WTC11 (cell line): ENCODE measurements at regions of chr12 and their contacts with region 1.

Region 1: DNA sequence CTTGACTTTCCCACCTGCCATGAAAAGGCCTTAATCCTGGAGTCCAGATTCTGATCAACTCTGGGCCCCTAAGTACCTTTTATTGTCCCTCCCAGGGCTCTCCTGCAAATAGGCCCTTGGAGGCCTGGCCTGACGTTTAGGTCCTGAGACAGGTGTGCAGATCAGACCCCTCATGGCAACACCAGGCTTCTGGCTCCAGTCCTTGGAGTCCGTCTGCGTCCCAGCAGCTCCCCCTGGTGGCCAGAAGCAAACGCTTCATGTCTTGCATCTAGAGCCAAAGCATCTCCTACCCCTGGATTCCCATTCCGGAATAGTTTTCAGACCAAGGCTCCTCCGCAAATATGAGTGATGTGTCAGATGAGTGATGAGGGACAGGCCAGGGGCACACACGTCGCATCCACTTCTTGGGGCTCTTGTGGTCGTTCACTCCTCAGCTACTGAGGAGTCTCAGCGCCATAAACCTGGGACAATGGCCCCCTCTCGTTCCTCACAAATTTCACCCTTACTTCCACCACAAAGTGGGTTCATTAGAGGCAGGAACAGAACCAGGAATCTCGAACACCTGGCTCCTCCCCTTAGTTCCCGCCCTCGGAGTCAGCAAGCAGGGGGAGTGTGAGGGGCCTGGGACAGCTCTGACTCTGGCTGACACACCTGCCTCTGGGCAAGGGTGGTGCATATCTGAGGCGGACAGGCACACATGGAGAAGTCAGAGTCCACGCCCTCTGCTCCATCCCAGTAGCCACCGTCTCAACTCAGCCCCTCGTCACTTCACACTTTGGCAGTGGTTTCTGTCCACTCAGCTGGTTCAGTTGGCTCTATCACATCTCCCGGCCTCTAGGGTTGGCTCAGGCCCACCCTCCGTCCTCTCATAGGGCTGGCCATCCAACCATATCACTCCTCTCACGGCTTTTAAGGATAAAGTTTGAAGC is 77.9 kb upstream of the PWP1 start:
- DNase-seq: peak; percentile 93
- ATAC-seq: peak; percentile 71
- H3K4me3 Mint-ChIP-seq: no peak overlapping the region
- H3K27ac Mint-ChIP-seq: 0 out of 2 replicates have a peak overlapping the region, but pooled peaks have one; percentile 7
- H3K4me1 Mint-ChIP-seq: peaks cover 51% of the 10 kb centered on the region
- H3K27me3 Mint-ChIP-seq: no peaks in the 10 kb centered on the region
- CTCF ChIP-seq: peak; percentile 93

Region 2: GRCh38 chr12:107131832-107132616 is 475.7 kb before region 1 on chr12:
- CTCF ChIA-PET with region 1: interaction called, 35 read pairs
- POLR2A ChIA-PET with region 1: no interaction called
- DNase-seq: no peak
- ATAC-seq: peak; percentile 52
- H3K4me3 Mint-ChIP-seq: no peak overlapping the region
- H3K27ac Mint-ChIP-seq: no peak overlapping the region
- H3K4me1 Mint-ChIP-seq: peaks cover 34% of the 10 kb centered on the region
- H3K27me3 Mint-ChIP-seq: peaks cover 6% of the 10 kb centered on the region; the same call in 1 of the 2 replicates
- CTCF ChIP-seq: peak; percentile 37; the same call in 1 of the 2 replicates

Region 3: DNA sequence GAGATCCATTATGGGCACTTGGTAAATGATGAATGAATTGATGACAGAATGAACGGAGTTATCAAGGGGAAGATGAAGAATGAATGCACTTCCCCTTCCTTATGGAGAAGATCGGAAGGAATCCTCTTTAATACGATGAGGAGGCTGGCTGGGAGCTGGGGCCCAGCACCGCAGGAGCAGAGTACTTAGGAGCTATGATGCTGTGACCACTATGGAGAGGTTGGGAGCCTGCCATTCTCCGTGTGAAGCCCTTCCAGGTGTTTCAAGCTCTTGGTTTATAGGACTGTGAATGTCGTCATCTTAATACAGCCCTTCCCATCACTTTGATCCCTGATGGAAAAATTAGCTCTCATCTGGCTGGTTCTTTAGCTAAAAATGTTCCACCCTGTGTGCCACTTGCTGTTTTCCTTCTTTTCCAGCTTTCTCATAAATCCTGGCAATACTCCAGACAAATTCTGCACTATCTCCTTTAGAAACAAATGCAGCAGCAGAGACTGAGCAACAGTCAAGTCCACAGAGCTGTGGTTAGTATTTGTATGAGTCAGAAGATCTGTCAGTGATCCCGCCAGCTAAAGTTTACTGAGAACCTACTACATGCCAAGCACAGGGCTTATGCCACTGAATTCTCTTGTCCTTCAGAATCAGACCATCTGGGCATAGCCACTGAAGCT is 251.3 kb before region 1 on chr12:
- CTCF ChIA-PET with region 1: no interaction called
- POLR2A ChIA-PET with region 1: no interaction called
- DNase-seq: no peak
- ATAC-seq: no peak
- H3K4me3 Mint-ChIP-seq: no peak overlapping the region
- H3K27ac Mint-ChIP-seq: no peak overlapping the region
- H3K4me1 Mint-ChIP-seq: no peaks in the 10 kb centered on the region
- H3K27me3 Mint-ChIP-seq: peaks cover 4% of the 10 kb centered on the region; the same call in 1 of the 2 replicates
- CTCF ChIP-seq: no peak

Region 4: GRCh38 chr12:107402041-107403022 is 205.4 kb before region 1 on chr12:
- CTCF ChIA-PET with region 1: interaction called, 14 read pairs
- POLR2A ChIA-PET with region 1: no interaction called
- DNase-seq: peak; percentile 83
- ATAC-seq: peak; percentile 88
- H3K4me3 Mint-ChIP-seq: no peak overlapping the region
- H3K27ac Mint-ChIP-seq: no peak overlapping the region
- H3K4me1 Mint-ChIP-seq: peaks cover 35% of the 10 kb centered on the region
- H3K27me3 Mint-ChIP-seq: no peaks in the 10 kb centered on the region
- CTCF ChIP-seq: no peak; the same call in 1 of the 2 replicates

Region 5: DNA sequence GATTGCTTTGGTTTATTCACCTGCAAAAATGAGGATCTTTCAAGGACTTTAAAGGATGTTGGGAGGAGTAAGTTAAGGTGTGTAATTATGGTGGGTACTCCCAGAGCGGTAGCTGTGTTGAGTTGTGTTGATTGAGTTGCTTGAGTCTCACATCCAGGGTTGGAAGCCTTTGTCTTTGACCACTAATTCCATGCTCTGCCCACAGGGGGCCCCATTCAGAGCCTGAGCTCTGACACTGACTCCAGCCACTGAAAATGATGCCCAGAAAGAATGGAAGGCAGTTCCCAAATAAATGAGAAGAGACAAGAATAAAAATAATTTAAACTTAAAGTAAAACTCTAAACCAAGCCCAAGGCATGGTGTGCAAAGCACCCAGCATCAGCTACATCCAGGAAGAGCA is 159.5 kb before region 1 on chr12:
- CTCF ChIA-PET with region 1: interaction called, 12 read pairs
- POLR2A ChIA-PET with region 1: no interaction called
- DNase-seq: peak; percentile 67
- ATAC-seq: peak; percentile 82
- H3K4me3 Mint-ChIP-seq: no peak overlapping the region
- H3K27ac Mint-ChIP-seq: no peak overlapping the region
- H3K4me1 Mint-ChIP-seq: peaks cover 23% of the 10 kb centered on the region
- H3K27me3 Mint-ChIP-seq: no peaks in the 10 kb centered on the region; the same call in 1 of the 2 replicates
- CTCF ChIP-seq: no peak

Region 6: GRCh38 chr12:107468182-107468581 is 139.5 kb before region 1 on chr12:
- CTCF ChIA-PET with region 1: interaction called, 16 read pairs
- POLR2A ChIA-PET with region 1: no interaction called
- DNase-seq: no peak
- ATAC-seq: peak; percentile 25
- H3K4me3 Mint-ChIP-seq: no peak overlapping the region
- H3K27ac Mint-ChIP-seq: no peak overlapping the region
- H3K4me1 Mint-ChIP-seq: peaks cover 22% of the 10 kb centered on the region
- H3K27me3 Mint-ChIP-seq: peaks cover 3% of the 10 kb centered on the region
- CTCF ChIP-seq: no peak

Region 7: DNA sequence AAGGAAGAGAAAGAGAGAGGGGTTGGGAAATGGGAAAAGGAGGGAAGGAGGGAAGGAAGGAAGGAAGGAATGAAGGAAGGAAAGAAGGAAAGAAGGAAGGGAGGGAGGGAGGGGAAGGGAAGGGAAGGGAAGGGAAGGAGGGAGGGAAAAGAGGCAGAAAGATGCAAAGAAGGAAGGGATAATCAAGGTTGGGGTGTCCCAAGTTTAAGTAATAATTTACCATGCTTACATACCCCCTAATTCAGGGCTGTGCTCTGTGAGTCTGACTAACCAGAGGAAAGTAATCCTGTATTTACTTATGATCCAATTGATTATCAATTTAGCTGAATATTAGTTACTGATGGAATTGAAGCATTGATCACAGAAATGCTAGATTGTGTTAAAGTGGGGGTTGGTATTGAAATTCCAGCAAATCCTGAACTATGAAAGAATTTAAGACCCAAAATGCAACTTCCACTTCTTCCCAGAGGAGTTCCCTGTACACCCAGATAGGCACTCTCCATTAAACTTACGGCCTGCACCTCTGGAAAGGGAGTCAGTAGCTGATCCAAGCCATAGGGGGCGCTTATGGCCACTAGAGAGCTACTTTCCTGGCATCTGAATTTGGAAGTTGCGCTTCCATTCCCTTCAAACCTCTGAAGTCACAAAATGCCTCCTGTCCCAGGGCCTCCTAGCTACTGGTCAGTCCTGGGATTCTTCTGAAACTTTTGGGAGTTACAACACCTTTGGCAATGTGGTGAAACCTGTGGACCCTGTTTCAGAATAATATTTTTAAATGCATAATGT is 84.8 kb before region 1 on chr12:
- CTCF ChIA-PET with region 1: interaction called, 14 read pairs
- POLR2A ChIA-PET with region 1: no interaction called
- DNase-seq: peak; percentile 65
- ATAC-seq: peak; percentile 96
- H3K4me3 Mint-ChIP-seq: no peak overlapping the region
- H3K27ac Mint-ChIP-seq: no peak overlapping the region
- H3K4me1 Mint-ChIP-seq: no peaks in the 10 kb centered on the region; the same call in 1 of the 2 replicates
- H3K27me3 Mint-ChIP-seq: no peaks in the 10 kb centered on the region
- CTCF ChIP-seq: peak; percentile 48

Region 8: DNA sequence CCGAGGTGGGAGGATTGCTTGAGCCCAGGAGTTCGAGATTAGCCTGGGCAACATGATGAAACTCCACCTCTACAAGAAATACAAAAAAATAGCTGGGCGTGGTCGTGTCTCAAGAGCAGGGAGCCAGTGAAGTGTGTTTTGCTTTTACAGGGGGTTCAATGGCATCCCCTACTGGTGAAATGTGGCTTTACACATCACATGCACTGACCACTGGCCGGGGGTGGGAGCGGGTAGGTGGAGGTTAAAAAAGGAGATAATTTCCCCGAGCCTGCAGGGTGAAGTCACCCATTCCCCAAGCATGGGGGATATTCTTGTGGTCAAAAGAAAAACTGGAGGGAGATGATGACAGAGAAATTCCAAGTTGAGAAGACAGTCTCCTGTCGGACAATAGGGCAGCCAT is 14.3 kb after region 1 on chr12:
- CTCF ChIA-PET with region 1: interaction called, 20 read pairs
- POLR2A ChIA-PET with region 1: no interaction called
- DNase-seq: peak; percentile 61
- ATAC-seq: peak; percentile 83
- H3K4me3 Mint-ChIP-seq: no peak overlapping the region
- H3K27ac Mint-ChIP-seq: no peak overlapping the region
- H3K4me1 Mint-ChIP-seq: 0 out of 2 replicates have a peak, but pooled peaks cover 4% of the 10 kb centered on the region
- H3K27me3 Mint-ChIP-seq: no peaks in the 10 kb centered on the region; the same call in 1 of the 2 replicates
- CTCF ChIP-seq: peak; percentile 89